Activated CD4-positive, alpha-beta memory T cell treated with anti-CD3 and anti-CD28 coated beads for 36 hours (primary cell): ENCODE measurements at regions of chr6 and their contacts with region 1.

Region 1: DNA sequence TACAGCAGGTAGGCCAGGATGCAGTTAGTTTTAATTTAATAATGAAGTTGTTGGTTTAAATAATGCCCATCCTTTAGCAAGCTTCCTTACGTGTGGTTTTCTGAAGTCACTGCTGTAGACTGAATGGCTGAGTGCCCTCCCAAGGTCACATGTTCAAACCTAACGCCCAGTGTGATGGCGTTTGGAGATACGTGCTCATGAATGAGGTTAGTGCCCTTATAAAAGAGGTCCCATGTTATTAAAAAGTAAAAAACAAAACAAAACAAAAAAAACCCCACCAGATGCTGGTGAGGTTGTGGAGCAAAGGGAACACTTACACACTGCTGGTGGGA is 16.3 kb downstream of the LRP11 start:
- DNase-seq: no peak
- H3K4me3 Mint-ChIP-seq: no peak overlapping the region
- H3K27ac Mint-ChIP-seq: no peak overlapping the region
- H3K4me1 Mint-ChIP-seq: peaks cover 16% of the 10 kb centered on the region
- H3K27me3 Mint-ChIP-seq: peaks cover 1% of the 10 kb centered on the region

Region 2: DNA sequence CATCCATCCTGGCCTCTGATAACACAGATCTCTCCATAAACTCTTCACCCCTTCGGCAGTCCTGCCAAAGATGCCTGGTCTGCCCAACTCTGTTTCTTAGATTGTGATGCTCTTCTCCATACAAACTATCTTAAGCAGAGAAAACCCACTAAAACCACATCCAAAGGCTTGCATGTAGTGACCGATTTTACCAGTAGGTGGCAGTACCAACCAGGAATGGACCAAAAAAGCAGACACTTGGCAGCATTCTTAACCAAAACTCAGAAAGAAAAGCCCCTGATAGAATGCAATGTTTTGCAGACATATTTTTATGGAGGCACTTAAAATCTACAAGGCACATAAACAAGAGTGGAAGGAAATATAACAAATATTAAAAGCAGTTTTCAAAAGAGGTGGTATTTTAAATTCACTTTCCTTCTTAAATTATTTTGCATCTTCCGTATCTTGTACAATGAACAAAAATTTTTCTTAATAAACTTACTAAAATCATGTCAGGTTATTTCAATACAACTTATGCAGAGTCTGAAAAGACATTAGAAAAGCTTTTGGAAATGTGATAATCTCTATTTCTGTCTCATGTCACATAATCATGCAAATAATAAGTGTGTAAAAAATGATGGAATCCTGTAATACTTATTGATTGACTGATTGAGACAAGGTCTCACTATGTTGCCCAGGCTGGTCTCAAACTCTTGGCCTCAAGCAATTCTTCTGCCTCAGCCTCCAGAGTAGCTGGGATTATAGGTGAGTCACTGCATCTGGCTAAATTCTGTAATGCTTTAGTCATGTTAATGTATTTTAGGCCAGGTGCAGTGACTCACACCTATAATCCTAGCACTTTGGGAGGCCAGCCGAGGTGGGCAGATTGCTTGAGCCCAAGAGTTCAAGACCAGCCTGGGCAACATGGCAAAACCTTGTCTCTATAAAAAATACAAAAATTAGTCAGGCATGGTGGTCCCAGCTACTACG is 13.1 kb before region 1 on chr6:
- CTCF ChIA-PET with region 1: interaction called, 7 read pairs
- POLR2A ChIA-PET with region 1: no interaction called
- intact Hi-C with region 1: loop called (anchors 1 kb)
- DNase-seq: peak; percentile 77
- H3K4me3 Mint-ChIP-seq: no peak overlapping the region
- H3K27ac Mint-ChIP-seq: no peak overlapping the region
- H3K4me1 Mint-ChIP-seq: peaks cover 2% of the 10 kb centered on the region
- H3K27me3 Mint-ChIP-seq: no peaks in the 10 kb centered on the region

Region 3: GRCh38 chr6:150091476-150091875 is 243.6 kb after region 1 on chr6:
- CTCF ChIA-PET with region 1: no interaction called
- POLR2A ChIA-PET with region 1: no interaction called
- intact Hi-C with region 1: no loop called
- DNase-seq: no peak
- H3K4me3 Mint-ChIP-seq: no peak overlapping the region
- H3K27ac Mint-ChIP-seq: no peak overlapping the region
- H3K4me1 Mint-ChIP-seq: no peaks in the 10 kb centered on the region
- H3K27me3 Mint-ChIP-seq: peaks cover 4% of the 10 kb centered on the region